ENCODE measurements at regions of chr1 and their contacts with region 1.

Region 1: DNA sequence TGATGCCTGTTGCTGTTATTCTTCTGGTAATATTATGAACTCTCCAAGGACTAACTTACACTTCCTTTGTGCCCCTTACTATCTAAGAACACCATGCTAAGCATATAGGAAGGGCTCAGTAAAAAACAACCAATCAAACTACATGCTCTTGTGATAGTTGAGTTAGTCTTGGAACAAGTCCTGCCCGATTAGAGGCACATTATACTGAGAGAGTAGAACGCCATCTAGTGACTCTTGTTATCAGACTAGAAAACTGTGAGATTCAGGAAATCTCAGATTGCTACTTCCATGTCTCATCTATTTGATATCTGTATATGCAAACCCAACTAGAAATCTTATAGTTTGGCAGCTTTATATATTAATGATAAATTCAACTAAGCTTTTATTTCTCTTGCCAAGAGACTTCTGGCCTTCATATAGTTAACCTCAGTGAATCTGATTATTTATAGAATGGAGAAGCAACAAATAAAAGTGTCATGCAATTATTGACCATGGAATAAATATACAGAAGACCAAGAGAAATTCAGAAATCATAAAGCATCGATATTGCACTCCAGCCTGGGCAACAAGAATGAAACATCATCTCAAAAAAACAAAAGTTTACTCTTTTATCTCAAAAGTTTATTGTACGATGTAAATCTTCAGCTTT is 7.8 kb upstream of the SRRM1 start:
- DNase-seq: peak; percentile 37 to 72 (median 56)
- ATAC-seq: peak; percentile 91
- H3K4me3 ChIP-seq: no peak overlapping the region
- H3K27ac ChIP-seq: no peak overlapping the region
- H3K4me1 ChIP-seq: no peaks in the 10 kb centered on the region
- H3K27me3 ChIP-seq: peaks cover 17 to 23% of the 10 kb centered on the region in 2 experiments
- CTCF ChIP-seq: peak; percentile 53 to 85 (median 69); a peak in 5 of 6 replicates
- EP300 ChIP-seq: no peak
- POLR2A ChIP-seq: no peak
- RAD21 ChIP-seq: peak; percentile 80 to 95

Region 2: DNA sequence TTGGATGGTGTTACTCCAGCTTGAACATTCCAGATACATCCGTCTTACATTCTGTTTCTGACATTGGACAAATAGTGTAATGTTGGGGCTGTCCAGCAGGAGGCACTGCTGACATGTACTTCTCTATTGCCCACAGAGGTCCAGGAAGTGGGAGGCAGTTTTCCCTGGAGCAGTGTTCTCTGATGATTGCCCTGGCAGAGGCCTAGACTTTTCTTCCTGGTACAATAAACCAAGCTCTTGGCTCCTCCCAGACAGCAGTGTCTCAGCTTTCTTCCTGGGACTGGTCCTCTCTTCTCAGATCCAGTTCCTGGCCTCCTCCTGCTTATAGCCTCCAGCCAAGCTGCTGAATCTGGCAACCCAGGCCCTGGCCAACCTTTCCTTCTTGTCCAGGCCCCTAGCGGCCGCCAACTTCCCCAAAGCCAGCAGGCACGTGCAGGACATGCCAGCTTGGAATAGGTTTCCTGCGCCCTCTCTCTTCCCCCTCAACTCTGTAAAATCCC is 433.3 kb before region 1 on chr1:
- CTCF ChIA-PET with region 1: interaction called, 35 read pairs
- POLR2A ChIA-PET with region 1: no interaction called
- in situ Hi-C with region 1: loop called (anchors 10 kb)
- intact Hi-C with region 1: loop called (anchors 1 kb)
- DNase-seq: peak; percentile 63 to 80 (median 69)
- ATAC-seq: peak; percentile 78
- H3K4me3 ChIP-seq: no peak overlapping the region
- H3K27ac ChIP-seq: no peak overlapping the region
- H3K4me1 ChIP-seq: no peaks in the 10 kb centered on the region; a peak in 1 of 5 replicates
- H3K27me3 ChIP-seq: peaks cover 16 to 43% of the 10 kb centered on the region in 2 experiments; a peak in 4 of 5 replicates
- CTCF ChIP-seq: peak; percentile 83 to 94 (median 94)
- EP300 ChIP-seq: no peak
- POLR2A ChIP-seq: no peak
- RAD21 ChIP-seq: peak; percentile 93 to 99

Region 3: DNA sequence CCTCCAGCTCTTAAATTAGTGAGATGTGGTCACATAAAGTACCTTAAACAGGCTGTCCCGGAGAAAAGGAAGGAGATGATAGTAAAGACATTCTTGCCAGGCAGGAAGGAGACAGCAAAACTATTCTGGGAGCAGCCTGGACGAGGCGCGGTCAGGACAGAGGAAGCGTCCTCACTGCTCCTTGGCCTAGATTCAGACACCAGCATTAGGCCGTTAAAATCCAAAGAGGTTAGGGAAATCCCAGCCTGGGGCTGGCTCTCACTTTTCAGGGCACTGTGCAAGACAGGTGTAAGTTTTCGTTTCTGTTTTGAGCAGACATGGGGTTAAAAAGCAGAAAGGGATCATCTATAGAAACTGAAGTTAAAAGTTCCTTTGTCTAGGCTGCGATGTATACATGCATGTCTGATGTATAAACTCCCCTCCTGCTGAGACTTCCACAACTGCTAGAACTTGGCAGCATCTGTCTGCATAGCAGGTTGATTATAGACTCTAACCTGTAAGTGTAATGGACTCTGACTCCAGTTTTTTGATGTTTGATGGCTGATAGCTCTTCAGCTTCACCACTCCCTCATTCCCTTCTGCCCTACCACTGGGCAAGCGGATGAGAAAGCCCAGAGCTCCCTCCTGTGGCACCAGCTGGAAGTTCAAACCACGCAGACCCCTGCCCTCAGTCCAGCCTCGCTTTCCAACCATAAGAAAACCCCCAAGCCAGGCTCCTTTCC is 243.3 kb before region 1 on chr1:
- CTCF ChIA-PET with region 1: interaction called, 7 read pairs
- POLR2A ChIA-PET with region 1: no interaction called
- in situ Hi-C with region 1: no loop called
- intact Hi-C with region 1: loop called (anchors 2 kb)
- DNase-seq: peak; percentile 71 to 74 (median 73)
- ATAC-seq: peak; percentile 95
- H3K4me3 ChIP-seq: no peak overlapping the region
- H3K27ac ChIP-seq: no peak overlapping the region
- H3K4me1 ChIP-seq: no peaks in the 10 kb centered on the region
- H3K27me3 ChIP-seq: peaks cover 0 to 3% of the 10 kb centered on the region in 2 experiments; a peak in 1 of 5 replicates
- CTCF ChIP-seq: peak; percentile 86 to 90 (median 87)
- EP300 ChIP-seq: no peak
- POLR2A ChIP-seq: no peak
- RAD21 ChIP-seq: peak; percentile 83 to 86

Region 4: GRCh38 chr1:24541711-24542346 is 93.5 kb before region 1 on chr1:
- CTCF ChIA-PET with region 1: interaction called, 11 read pairs
- POLR2A ChIA-PET with region 1: no interaction called
- in situ Hi-C with region 1: no loop called
- intact Hi-C with region 1: loop called (anchors 1 kb)
- DNase-seq: peak in 2 of 4 experiments; percentile 40 to 51
- ATAC-seq: peak; percentile 81
- H3K4me3 ChIP-seq: no peak overlapping the region
- H3K27ac ChIP-seq: no peak overlapping the region
- H3K4me1 ChIP-seq: peaks cover 1 to 3% of the 10 kb centered on the region in 2 experiments; a peak in 2 of 5 replicates
- H3K27me3 ChIP-seq: peaks cover 10 to 24% of the 10 kb centered on the region in 2 experiments; a peak in 4 of 5 replicates
- CTCF ChIP-seq: peak; percentile 74 to 82 (median 79)
- EP300 ChIP-seq: no peak
- POLR2A ChIP-seq: no peak
- RAD21 ChIP-seq: peak; percentile 51 to 80

Region 5: GRCh38 chr1:24594154-24594553 is 41.2 kb before region 1 on chr1:
- CTCF ChIA-PET with region 1: no interaction called
- POLR2A ChIA-PET with region 1: no interaction called
- in situ Hi-C with region 1: no loop called
- intact Hi-C with region 1: loop called (anchors 5 kb)
- DNase-seq: no peak
- ATAC-seq: no peak
- H3K4me3 ChIP-seq: no peak overlapping the region
- H3K27ac ChIP-seq: no peak overlapping the region
- H3K4me1 ChIP-seq: peaks cover 9 to 10% of the 10 kb centered on the region in 2 experiments; a peak in 4 of 5 replicates
- H3K27me3 ChIP-seq: peaks cover 12 to 24% of the 10 kb centered on the region in 2 experiments; a peak in 4 of 5 replicates
- CTCF ChIP-seq: no peak
- EP300 ChIP-seq: no peak
- POLR2A ChIP-seq: no peak
- RAD21 ChIP-seq: no peak